ENCODE measurements at regions of chr11 and their contacts with region 1.

Region 1: DNA sequence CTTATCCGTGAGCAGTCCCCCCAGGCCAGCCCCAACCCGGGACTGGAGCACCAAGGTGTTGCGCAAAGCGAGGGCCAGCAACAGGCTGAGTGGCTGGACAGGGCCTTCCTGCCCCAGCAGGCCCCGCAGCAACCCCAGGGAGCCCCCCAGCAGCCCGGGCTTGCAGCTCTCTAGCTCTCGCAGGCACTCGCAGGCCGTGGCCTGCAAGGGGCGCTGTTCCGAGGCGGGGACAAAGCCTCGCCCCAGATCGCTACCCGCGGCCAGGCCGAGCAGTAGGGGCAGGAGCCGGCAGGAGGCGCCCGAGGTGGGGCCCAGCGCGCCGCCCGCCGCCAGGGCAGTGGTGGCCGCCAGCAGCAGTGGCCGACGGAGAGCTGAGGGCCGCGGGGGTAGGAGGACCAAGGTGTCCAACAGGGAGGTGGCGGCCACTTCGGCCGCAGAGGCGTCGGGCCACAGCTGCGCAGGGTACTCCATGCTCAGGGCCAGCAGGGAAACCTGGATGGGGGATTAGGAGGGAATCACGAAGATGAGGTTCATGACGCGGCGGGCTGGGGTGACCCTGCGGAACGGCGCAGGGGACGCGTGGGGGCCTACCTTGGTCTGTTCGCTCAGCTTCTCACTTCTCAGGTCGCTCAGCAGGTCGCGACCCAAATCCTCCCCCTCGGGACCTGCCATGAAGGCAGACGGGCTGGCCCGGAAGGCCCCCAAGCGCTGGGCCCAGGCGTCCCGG is 762 bp downstream of the AP5B1 start:
- DNase-seq: peak; percentile 70 to 97
- H3K4me3 ChIP-seq: peak overlapping the region; percentile 43 to 89 (median 52)
- H3K27ac ChIP-seq: no peak overlapping the region
- H3K4me1 ChIP-seq: peaks cover 0 to 16% (median 3%) of the 10 kb centered on the region in 4 experiments; a peak in 6 of 7 replicates
- H3K27me3 ChIP-seq: peaks cover under 1 to 23% (median 18%) of the 10 kb centered on the region in 4 experiments
- CTCF ChIP-seq: peak in 2 of 3 experiments; percentile 99 to 100; a peak in 3 of 4 replicates
- EP300 ChIP-seq: peak in 1 of 2 experiments; percentile 67; a peak in 1 of 3 replicates
- POLR2A ChIP-seq: no peak
- RAD21 ChIP-seq: peak; percentile 79 to 88

Region 2: DNA sequence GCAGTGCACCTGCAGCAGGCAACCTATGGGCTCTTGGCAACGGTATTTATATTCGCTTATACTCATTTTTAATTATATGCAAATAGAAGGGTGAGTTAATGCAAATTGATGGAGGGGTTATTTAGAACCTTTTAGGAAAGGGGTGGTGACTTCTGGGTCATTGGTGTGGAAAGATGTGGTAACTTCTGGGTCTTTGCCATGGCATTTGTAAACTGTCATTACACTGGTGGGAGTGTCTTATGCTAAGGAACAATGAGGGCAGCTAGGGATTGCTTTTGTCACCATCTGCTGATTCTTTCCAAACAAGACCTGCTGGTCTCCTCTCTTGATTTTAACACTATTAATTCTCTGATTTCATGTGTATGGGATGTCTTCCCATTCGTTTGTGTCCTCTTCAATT is 79.6 kb before region 1 on chr11:
- CTCF ChIA-PET with region 1: interaction called, 24 read pairs
- POLR2A ChIA-PET with region 1: no interaction called
- DNase-seq: no peak
- H3K4me3 ChIP-seq: no peak overlapping the region
- H3K27ac ChIP-seq: no peak overlapping the region
- H3K4me1 ChIP-seq: no peaks in the 10 kb centered on the region
- H3K27me3 ChIP-seq: no peaks in the 10 kb centered on the region; a peak in 3 of 7 replicates
- CTCF ChIP-seq: no peak
- EP300 ChIP-seq: no peak
- POLR2A ChIP-seq: no peak
- RAD21 ChIP-seq: no peak

Region 3: DNA sequence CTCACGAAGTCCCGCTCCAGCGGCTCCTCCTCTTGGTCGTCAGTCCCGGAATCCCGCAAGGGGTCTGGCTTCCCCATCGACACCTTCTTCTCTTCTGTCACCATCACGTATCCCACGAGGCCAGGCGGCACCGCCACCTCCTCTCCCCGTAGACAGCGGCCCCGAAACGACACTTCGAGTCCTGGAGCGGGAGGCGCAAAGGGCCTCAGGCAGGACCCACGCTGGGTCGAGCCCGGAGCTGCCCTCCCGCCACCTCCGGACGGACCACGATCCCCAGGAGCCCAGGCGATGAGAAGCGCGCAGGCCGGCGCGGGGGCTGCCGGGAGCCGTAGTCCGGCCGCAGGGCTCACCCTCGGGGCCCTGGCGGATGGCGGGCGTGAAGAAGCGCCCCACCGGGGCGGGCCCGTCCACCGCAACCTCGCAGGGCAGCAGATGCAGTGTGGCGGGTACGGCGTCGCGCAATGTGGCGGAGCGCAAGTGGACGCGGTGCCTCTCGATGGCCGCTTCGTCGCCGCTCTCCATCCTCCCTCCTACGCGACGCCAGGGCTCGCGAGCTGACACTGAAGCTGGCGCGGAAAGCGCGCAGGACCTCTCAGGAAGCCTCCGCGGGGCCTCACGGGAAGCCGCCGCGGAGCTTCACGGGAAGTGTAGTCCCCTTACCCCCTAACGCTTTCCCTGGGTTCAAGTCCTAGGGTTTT is 59.6 kb before region 1 on chr11 and contains the start of gene RNASEH2C:
- CTCF ChIA-PET with region 1: interaction called, 24 read pairs
- POLR2A ChIA-PET with region 1: interaction called, 6 read pairs
- DNase-seq: peak; percentile 44 to 90
- H3K4me3 ChIP-seq: peak within 1 kb of the TSS; percentile 83 to 91 (median 85)
- H3K27ac ChIP-seq: peak within 1 kb of the TSS; percentile 90
- H3K4me1 ChIP-seq: peaks cover 0 to 6% (median 3%) of the 10 kb centered on the region in 4 experiments; a peak in 2 of 7 replicates
- H3K27me3 ChIP-seq: no peaks in the 10 kb centered on the region
- CTCF ChIP-seq: no peak
- EP300 ChIP-seq: no peak
- POLR2A ChIP-seq: peak; percentile 80 to 81
- RAD21 ChIP-seq: no peak
- total RNA-seq, gene RNASEH2C: 37.9 and 40.2 TPM in 2 replicates

Region 4: GRCh38 chr11:65796726-65797601 is 16.9 kb after region 1 on chr11:
- CTCF ChIA-PET with region 1: interaction called, 128 read pairs
- POLR2A ChIA-PET with region 1: interaction called, 8 read pairs
- DNase-seq: no peak
- H3K4me3 ChIP-seq: no peak overlapping the region
- H3K27ac ChIP-seq: no peak overlapping the region
- H3K4me1 ChIP-seq: peaks cover 0 to 21% (median 5%) of the 10 kb centered on the region in 4 experiments; a peak in 5 of 7 replicates
- H3K27me3 ChIP-seq: no peaks in the 10 kb centered on the region
- CTCF ChIP-seq: no peak
- EP300 ChIP-seq: no peak
- POLR2A ChIP-seq: no peak
- RAD21 ChIP-seq: 0 out of 4 replicates have a peak, but pooled peaks of 1 of the 2 experiments have one; percentile 6

Region 5: GRCh38 chr11:65810046-65810868 is 30.2 kb after region 1 on chr11:
- CTCF ChIA-PET with region 1: interaction called, 347 read pairs
- POLR2A ChIA-PET with region 1: interaction called, 4 read pairs
- DNase-seq: no peak
- H3K4me3 ChIP-seq: no peak overlapping the region
- H3K27ac ChIP-seq: no peak overlapping the region
- H3K4me1 ChIP-seq: no peaks in the 10 kb centered on the region
- H3K27me3 ChIP-seq: no peaks in the 10 kb centered on the region; a peak in 2 of 7 replicates
- CTCF ChIP-seq: 0 out of 4 replicates have a peak, but pooled peaks of 1 of the 3 experiments have one; percentile 20
- EP300 ChIP-seq: no peak
- POLR2A ChIP-seq: no peak
- RAD21 ChIP-seq: peak; percentile 17 to 41; a peak in 3 of 4 replicates

Region 6: GRCh38 chr11:65833297-65834030 is 53.5 kb after region 1 on chr11 and contains the start of gene SNX32:
- CTCF ChIA-PET with region 1: interaction called, 347 read pairs
- POLR2A ChIA-PET with region 1: interaction called, 7 read pairs
- DNase-seq: peak in 1 of 2 experiments; percentile 97
- H3K4me3 ChIP-seq: peak within 1 kb of the TSS; percentile 68 to 72 (median 70)
- H3K27ac ChIP-seq: peak within 1 kb of the TSS; percentile 70; the same call in 1 of the 2 replicates
- H3K4me1 ChIP-seq: peaks cover 0 to 8% (median 6%) of the 10 kb centered on the region in 4 experiments; a peak in 6 of 7 replicates
- H3K27me3 ChIP-seq: peaks cover 0 to 9% (median 6%) of the 10 kb centered on the region in 4 experiments; a peak in 4 of 7 replicates
- CTCF ChIP-seq: no peak
- EP300 ChIP-seq: no peak
- POLR2A ChIP-seq: peak in 1 of 2 experiments; percentile 41; a peak in 1 of 3 replicates
- RAD21 ChIP-seq: no peak
- total RNA-seq, gene SNX32: 1.1 and 2.2 TPM in 2 replicates

Region 7: DNA sequence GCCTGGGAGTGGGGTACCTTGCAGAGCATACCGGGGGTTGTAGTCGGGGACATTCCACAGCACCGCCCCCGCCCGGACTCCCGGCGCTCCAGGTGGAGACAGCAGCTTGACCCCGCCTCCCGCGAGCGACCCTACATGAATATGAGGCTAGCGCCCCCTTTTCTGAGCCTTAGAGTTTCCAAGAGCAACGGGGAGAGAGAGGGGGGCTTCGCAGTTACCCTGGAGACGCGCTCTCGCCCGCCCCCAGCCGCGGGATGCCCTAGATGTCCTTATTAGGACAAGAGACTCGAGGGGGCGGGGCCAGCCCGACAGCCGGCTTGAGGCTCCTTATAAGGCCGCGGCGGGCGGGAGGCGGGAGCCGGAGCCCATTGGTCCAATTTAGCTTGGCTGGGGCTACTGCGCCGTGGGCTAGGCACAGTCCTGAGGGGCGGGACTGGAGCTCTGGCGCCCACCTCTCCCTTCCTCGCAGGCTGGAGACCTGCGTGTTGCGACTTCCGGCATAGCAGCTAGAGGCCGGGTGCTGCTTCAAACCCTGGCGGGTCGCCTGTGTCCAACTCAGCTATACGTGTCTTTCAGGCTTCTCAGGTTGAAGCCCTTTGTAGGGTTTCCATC is 79.3 kb after region 1 on chr11:
- CTCF ChIA-PET with region 1: interaction called, 46 read pairs
- POLR2A ChIA-PET with region 1: interaction called, 9 read pairs
- DNase-seq: peak; percentile 99
- H3K4me3 ChIP-seq: peak overlapping the region; percentile 75 to 95 (median 86)
- H3K27ac ChIP-seq: peak overlapping the region; percentile 96
- H3K4me1 ChIP-seq: peaks cover 0 to 15% (median 6%) of the 10 kb centered on the region in 4 experiments; a peak in 5 of 7 replicates
- H3K27me3 ChIP-seq: no peaks in the 10 kb centered on the region
- CTCF ChIP-seq: peak in 2 of 3 experiments; percentile 28 to 48; a peak in 3 of 4 replicates
- EP300 ChIP-seq: peak in 1 of 2 experiments; percentile 12; a peak in 1 of 3 replicates
- POLR2A ChIP-seq: peak in 1 of 2 experiments; percentile 96; a peak in 2 of 3 replicates
- RAD21 ChIP-seq: peak in 1 of 2 experiments; percentile 6; a peak in 1 of 4 replicates

Region 8: GRCh38 chr11:66069715-66070603 is 289.9 kb after region 1 on chr11 and contains the start of gene PACS1:
- CTCF ChIA-PET with region 1: no interaction called
- POLR2A ChIA-PET with region 1: no interaction called
- DNase-seq: peak; percentile 34 to 85
- H3K4me3 ChIP-seq: peak within 1 kb of the TSS; percentile 43 to 90 (median 63)
- H3K27ac ChIP-seq: peak within 1 kb of the TSS; percentile 46
- H3K4me1 ChIP-seq: peaks cover 5 to 13% (median 8%) of the 10 kb centered on the region in 4 experiments; a peak in 6 of 7 replicates
- H3K27me3 ChIP-seq: no peaks in the 10 kb centered on the region
- CTCF ChIP-seq: no peak
- EP300 ChIP-seq: no peak
- POLR2A ChIP-seq: peak in 1 of 2 experiments; percentile 88; a peak in 1 of 3 replicates
- RAD21 ChIP-seq: no peak
- total RNA-seq, gene PACS1: 34.4 and 36.0 TPM in 2 replicates